CD8-positive, alpha-beta T cell (primary cell): ENCODE measurements at regions of chr7 and their contacts with region 1.

Region 1: GRCh38 chr7:150898475-150899011 is 46.2 kb downstream of the AOC1 start:
- DNase-seq: peak; percentile 60 to 90 (median 79)
- ATAC-seq: peak; percentile 69
- H3K4me3 ChIP-seq: no peak overlapping the region
- H3K4me3 Mint-ChIP-seq: no peak overlapping the region
- H3K27ac ChIP-seq: no peak overlapping the region
- H3K27ac Mint-ChIP-seq: no peak overlapping the region
- H3K4me1 ChIP-seq: peaks cover 7% of the 10 kb centered on the region
- H3K4me1 Mint-ChIP-seq: peaks cover 9% of the 10 kb centered on the region
- H3K27me3 ChIP-seq: peaks cover 0 to 4% of the 10 kb centered on the region in 2 experiments
- H3K27me3 Mint-ChIP-seq: peaks cover 61% of the 10 kb centered on the region
- CTCF ChIP-seq: peak; percentile 92

Region 2: DNA sequence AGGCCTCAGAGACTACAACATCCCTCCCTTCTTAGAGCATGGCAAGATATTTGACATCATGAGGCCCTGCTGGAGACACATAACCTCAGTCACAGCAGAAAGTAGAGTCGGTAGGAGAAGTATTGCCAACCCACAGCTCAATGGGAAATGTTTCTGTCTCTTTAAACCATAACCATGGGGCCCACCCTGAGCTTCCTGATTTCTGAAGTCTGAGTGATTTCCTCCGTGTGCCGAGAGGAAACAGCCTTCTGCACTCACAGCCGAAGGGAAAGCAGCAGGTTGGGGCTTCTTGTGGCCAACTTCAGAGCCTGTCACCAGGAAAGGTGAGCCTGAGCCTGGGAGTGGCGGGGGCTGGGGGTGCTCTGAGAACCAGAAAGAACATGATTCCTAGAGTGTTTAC is 182.2 kb before region 1 on chr7 and contains the start of gene GIMAP1:
- CTCF ChIA-PET with region 1: no interaction called
- POLR2A ChIA-PET with region 1: no interaction called
- intact Hi-C with region 1: no loop called
- DNase-seq: peak in 8 of 9 experiments; percentile 59 to 85 (median 73)
- ATAC-seq: peak; percentile 84
- H3K4me3 ChIP-seq: peak within 1 kb of the TSS; percentile 90 to 91
- H3K4me3 Mint-ChIP-seq: peak within 1 kb of the TSS; percentile 95
- H3K27ac ChIP-seq: peak within 1 kb of the TSS; percentile 73 to 87
- H3K27ac Mint-ChIP-seq: peak within 1 kb of the TSS; percentile 96
- H3K4me1 ChIP-seq: peaks cover 50% of the 10 kb centered on the region
- H3K4me1 Mint-ChIP-seq: peaks cover 67% of the 10 kb centered on the region
- H3K27me3 ChIP-seq: no peaks in the 10 kb centered on the region
- H3K27me3 Mint-ChIP-seq: no peaks in the 10 kb centered on the region
- CTCF ChIP-seq: no peak
- total RNA-seq, gene GIMAP1: 6.1 to 6.2 TPM

Region 3: GRCh38 chr7:150909200-150909995 is 10.9 kb after region 1 on chr7:
- CTCF ChIA-PET with region 1: interaction called, 32 read pairs
- POLR2A ChIA-PET with region 1: interaction called, 3 read pairs
- intact Hi-C with region 1: no loop called
- DNase-seq: peak; percentile 16 to 77 (median 45)
- ATAC-seq: peak; percentile 81
- H3K4me3 ChIP-seq: no peak overlapping the region
- H3K4me3 Mint-ChIP-seq: peak overlapping the region; percentile 26
- H3K27ac ChIP-seq: no peak overlapping the region
- H3K27ac Mint-ChIP-seq: no peak overlapping the region
- H3K4me1 ChIP-seq: peaks cover 12% of the 10 kb centered on the region
- H3K4me1 Mint-ChIP-seq: peaks cover 14% of the 10 kb centered on the region
- H3K27me3 ChIP-seq: peaks cover 0 to 14% of the 10 kb centered on the region in 2 experiments
- H3K27me3 Mint-ChIP-seq: peaks cover 4% of the 10 kb centered on the region
- CTCF ChIP-seq: no peak

Region 4: GRCh38 chr7:150923196-150923595 is 24.7 kb after region 1 on chr7:
- CTCF ChIA-PET with region 1: interaction called, 24 read pairs
- POLR2A ChIA-PET with region 1: no interaction called
- intact Hi-C with region 1: no loop called
- DNase-seq: no peak
- ATAC-seq: no peak
- H3K4me3 ChIP-seq: no peak overlapping the region
- H3K4me3 Mint-ChIP-seq: no peak overlapping the region
- H3K27ac ChIP-seq: no peak overlapping the region
- H3K27ac Mint-ChIP-seq: no peak overlapping the region
- H3K4me1 ChIP-seq: peaks cover 15% of the 10 kb centered on the region
- H3K4me1 Mint-ChIP-seq: peaks cover 15% of the 10 kb centered on the region
- H3K27me3 ChIP-seq: no peaks in the 10 kb centered on the region
- H3K27me3 Mint-ChIP-seq: peaks cover 12% of the 10 kb centered on the region
- CTCF ChIP-seq: no peak

Region 5: GRCh38 chr7:150951521-150951920 is 53.0 kb after region 1 on chr7:
- CTCF ChIA-PET with region 1: interaction called, 10 read pairs
- POLR2A ChIA-PET with region 1: no interaction called
- intact Hi-C with region 1: no loop called
- DNase-seq: no peak
- ATAC-seq: no peak
- H3K4me3 ChIP-seq: no peak overlapping the region
- H3K4me3 Mint-ChIP-seq: no peak overlapping the region
- H3K27ac ChIP-seq: no peak overlapping the region
- H3K27ac Mint-ChIP-seq: no peak overlapping the region
- H3K4me1 ChIP-seq: no peaks in the 10 kb centered on the region
- H3K4me1 Mint-ChIP-seq: peaks cover 4% of the 10 kb centered on the region
- H3K27me3 ChIP-seq: peaks cover 4 to 9% of the 10 kb centered on the region in 2 experiments
- H3K27me3 Mint-ChIP-seq: peaks cover 14% of the 10 kb centered on the region
- CTCF ChIP-seq: no peak

Region 6: GRCh38 chr7:150988230-150989226 is 90.0 kb after region 1 on chr7:
- CTCF ChIA-PET with region 1: interaction called, 44 read pairs
- POLR2A ChIA-PET with region 1: no interaction called
- intact Hi-C with region 1: loop called in 1 of 2 experiments (anchors 1 kb)
- DNase-seq: peak; percentile 45 to 80 (median 72)
- ATAC-seq: peak; percentile 79
- H3K4me3 ChIP-seq: no peak overlapping the region
- H3K4me3 Mint-ChIP-seq: peak overlapping the region; percentile 37
- H3K27ac ChIP-seq: no peak overlapping the region
- H3K27ac Mint-ChIP-seq: no peak overlapping the region
- H3K4me1 ChIP-seq: peaks cover 22% of the 10 kb centered on the region
- H3K4me1 Mint-ChIP-seq: peaks cover 18% of the 10 kb centered on the region
- H3K27me3 ChIP-seq: peaks cover 0 to 2% of the 10 kb centered on the region in 2 experiments
- H3K27me3 Mint-ChIP-seq: peaks cover 6% of the 10 kb centered on the region
- CTCF ChIP-seq: peak; percentile 79

Region 7: GRCh38 chr7:151017953-151018420 is 119.4 kb after region 1 on chr7:
- CTCF ChIA-PET with region 1: interaction called, 27 read pairs
- POLR2A ChIA-PET with region 1: no interaction called
- intact Hi-C with region 1: loop called in 1 of 2 experiments (anchors 1 kb)
- DNase-seq: peak; percentile 70 to 90 (median 83)
- ATAC-seq: peak; percentile 60
- H3K4me3 ChIP-seq: peak overlapping the region; percentile 40 to 54
- H3K4me3 Mint-ChIP-seq: peak overlapping the region; percentile 83
- H3K27ac ChIP-seq: peak overlapping the region in 1 of 2 experiments; percentile 27
- H3K27ac Mint-ChIP-seq: peak overlapping the region; percentile 39
- H3K4me1 ChIP-seq: peaks cover 61% of the 10 kb centered on the region
- H3K4me1 Mint-ChIP-seq: peaks cover 57% of the 10 kb centered on the region
- H3K27me3 ChIP-seq: peaks cover 0 to 16% of the 10 kb centered on the region in 2 experiments
- H3K27me3 Mint-ChIP-seq: peaks cover 7% of the 10 kb centered on the region
- CTCF ChIP-seq: peak; percentile 99